Activated CD8-positive, alpha-beta memory T cell treated with anti-CD3 and anti-CD28 coated beads, Interleukin-2, amount 10 ng/mL, durations not matched to agents 7 days and 5 days (primary cell): ENCODE measurements at regions of chr17 and their contacts with region 1.

Region 1: DNA sequence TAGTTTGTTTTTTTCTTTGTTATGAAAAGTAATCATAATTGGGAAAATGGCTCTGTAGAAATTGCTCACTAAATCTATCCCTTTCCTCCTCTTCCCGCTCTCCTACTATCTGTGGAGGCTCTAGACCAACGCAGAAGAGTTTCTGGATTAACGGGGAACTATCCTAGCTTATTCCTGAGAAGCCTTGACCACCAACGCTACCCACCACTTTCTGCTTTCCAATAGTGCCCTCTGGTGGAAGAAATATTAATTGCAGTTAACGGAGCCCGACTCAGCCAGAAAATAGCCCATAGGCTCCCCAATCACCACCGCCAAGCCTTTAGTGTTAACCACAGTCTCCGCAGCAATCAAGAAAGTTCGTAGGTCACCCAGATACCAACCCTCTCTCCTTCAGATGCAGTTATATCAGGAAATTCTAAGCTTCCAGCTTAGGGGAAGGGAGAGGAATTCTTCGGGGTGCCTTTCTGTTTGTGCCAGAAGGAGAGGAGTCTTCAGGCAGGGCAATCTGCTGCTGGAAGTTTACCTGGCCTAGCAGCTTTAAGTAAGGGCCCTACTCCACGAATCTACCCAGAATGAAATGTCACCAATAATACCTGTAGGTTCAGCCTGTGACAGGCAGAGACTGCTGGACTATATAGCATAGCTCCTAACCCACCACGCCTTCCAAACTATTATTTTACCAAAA is 23.0 kb upstream of the NSRP1 start:
- DNase-seq: peak; percentile 62
- ATAC-seq: peak; percentile 72
- H3K4me3 Mint-ChIP-seq: no peak overlapping the region
- H3K27ac Mint-ChIP-seq: no peak overlapping the region
- H3K4me1 Mint-ChIP-seq: peaks cover 7% of the 10 kb centered on the region
- H3K27me3 Mint-ChIP-seq: peaks cover 42% of the 10 kb centered on the region

Region 2: DNA sequence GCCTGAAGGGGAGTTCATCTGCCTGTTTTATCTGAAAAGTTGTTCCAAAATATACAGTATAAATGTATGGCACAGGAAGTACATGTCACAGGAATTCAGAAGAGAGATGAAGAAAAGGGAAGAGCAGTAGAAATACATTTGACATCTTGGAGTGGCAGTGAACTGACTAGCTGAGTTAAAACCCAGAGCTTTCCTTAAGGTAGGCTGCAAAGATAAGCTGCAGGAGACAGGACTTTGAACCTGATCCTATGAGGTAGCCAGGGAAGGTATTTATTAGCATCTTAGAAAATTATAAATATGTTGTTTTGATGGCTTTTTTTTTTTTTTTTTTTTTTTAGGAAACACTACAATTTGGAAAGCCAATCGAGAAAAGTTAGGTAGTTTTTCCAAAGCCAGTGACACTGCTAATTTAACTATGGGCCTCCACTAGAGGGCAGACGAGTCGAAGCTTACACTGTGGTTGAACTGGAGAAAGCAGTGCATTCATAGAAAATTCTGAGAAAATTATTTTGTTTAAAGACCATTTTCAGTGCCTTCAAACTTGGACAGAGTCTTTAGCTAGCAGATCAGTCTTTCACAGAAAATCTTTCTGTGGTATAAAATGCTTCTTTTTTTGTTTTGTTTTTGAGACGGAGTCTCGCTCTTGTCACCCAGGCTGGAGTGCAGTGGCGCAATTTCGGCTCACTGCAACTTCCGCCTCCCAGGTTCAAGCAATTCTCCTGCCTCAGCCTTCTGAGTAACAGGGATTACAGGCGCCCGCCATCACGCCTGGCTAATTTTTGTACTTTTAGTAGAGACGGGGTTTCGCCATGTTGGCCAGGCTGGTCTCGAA is 285.9 kb before region 1 on chr17:
- CTCF ChIA-PET with region 1: interaction called, 16 read pairs
- DNase-seq: peak; percentile 78
- ATAC-seq: peak; percentile 78
- H3K4me3 Mint-ChIP-seq: no peak overlapping the region
- H3K27ac Mint-ChIP-seq: no peak overlapping the region
- H3K4me1 Mint-ChIP-seq: peaks cover 19% of the 10 kb centered on the region
- H3K27me3 Mint-ChIP-seq: no peaks in the 10 kb centered on the region

Region 3: GRCh38 chr17:30021708-30022317 is 71.8 kb before region 1 on chr17:
- CTCF ChIA-PET with region 1: interaction called, 45 read pairs
- DNase-seq: peak; percentile 47
- ATAC-seq: no peak
- H3K4me3 Mint-ChIP-seq: no peak overlapping the region
- H3K27ac Mint-ChIP-seq: no peak overlapping the region
- H3K4me1 Mint-ChIP-seq: peaks cover 1% of the 10 kb centered on the region
- H3K27me3 Mint-ChIP-seq: peaks cover 13% of the 10 kb centered on the region

Region 4: GRCh38 chr17:30031214-30031869 is 62.3 kb before region 1 on chr17:
- CTCF ChIA-PET with region 1: interaction called, 45 read pairs
- DNase-seq: no peak
- ATAC-seq: no peak
- H3K4me3 Mint-ChIP-seq: no peak overlapping the region
- H3K27ac Mint-ChIP-seq: no peak overlapping the region
- H3K4me1 Mint-ChIP-seq: peaks cover 2% of the 10 kb centered on the region
- H3K27me3 Mint-ChIP-seq: peaks cover 9% of the 10 kb centered on the region

Region 5: DNA sequence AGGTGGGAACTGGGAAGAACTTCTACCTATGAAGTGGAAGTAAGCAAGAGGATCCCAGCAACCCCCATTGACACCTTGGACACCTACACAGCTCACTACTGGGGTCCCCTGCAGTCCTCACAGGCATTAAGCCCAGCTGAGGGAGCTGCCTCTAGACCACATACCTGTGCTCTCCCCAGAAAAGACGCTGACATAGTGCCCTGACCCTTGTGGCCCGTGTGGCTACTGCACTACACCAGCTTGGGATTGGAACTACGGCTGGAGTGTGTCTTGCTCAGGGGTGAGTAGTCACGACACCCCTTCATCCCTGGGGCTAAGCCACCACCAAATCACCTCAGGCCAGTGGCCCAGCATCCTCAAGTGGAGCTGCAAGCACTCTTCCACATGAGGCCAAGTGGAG is 31.2 kb before region 1 on chr17:
- CTCF ChIA-PET with region 1: interaction called, 12 read pairs
- DNase-seq: no peak
- ATAC-seq: no peak
- H3K4me3 Mint-ChIP-seq: no peak overlapping the region
- H3K27ac Mint-ChIP-seq: no peak overlapping the region
- H3K4me1 Mint-ChIP-seq: no peaks in the 10 kb centered on the region
- H3K27me3 Mint-ChIP-seq: peaks cover 42% of the 10 kb centered on the region

Region 6: DNA sequence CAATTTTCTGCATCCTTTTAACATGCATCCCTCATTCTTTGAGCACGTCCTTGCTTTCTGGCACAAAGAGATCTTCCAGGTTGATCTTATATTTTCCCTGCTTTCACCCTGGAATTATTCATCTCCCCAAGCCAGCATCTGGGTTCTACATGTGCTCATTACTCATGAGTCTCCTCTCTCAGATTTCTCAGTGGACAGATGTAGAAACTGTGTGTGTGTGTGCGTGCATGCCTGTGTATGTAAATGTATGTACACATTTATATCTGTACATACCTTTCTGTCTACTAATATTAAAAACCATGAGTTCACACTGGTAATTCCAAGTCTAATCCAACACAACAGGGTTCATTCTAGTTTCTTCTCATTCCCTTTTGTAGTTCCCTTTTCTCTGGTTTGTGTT is 18.9 kb before region 1 on chr17:
- CTCF ChIA-PET with region 1: interaction called, 17 read pairs
- DNase-seq: no peak
- ATAC-seq: no peak
- H3K4me3 Mint-ChIP-seq: no peak overlapping the region
- H3K27ac Mint-ChIP-seq: no peak overlapping the region
- H3K4me1 Mint-ChIP-seq: no peaks in the 10 kb centered on the region
- H3K27me3 Mint-ChIP-seq: peaks cover 52% of the 10 kb centered on the region

Region 7: DNA sequence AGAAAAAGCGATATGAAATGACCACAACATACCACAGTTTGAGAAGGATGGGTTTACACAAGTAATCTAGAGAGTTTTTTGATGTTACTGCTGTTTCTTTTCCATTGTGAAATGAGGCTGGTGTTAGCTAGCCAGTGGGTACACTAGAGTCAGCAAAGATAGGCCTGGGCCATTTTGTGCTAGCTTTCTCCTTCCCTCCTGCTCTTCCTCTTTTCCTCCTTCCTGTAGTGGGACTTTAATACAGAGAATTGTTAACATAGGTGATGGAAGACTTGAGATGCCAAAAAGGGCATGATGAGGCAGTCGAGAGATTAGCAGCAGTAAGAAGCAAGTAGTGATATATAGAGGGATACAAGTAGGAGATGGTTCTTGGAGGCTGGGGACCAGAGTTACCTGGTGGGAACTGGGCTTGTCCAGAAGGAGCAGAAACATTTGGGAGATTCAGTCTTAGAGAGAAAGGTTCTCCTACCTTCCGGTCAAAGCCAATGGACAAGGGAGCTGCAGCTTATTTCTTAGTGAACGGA is 30.7 kb after region 1 on chr17:
- CTCF ChIA-PET with region 1: interaction called, 22 read pairs
- DNase-seq: no peak
- ATAC-seq: no peak
- H3K4me3 Mint-ChIP-seq: no peak overlapping the region
- H3K27ac Mint-ChIP-seq: no peak overlapping the region
- H3K4me1 Mint-ChIP-seq: peaks cover 34% of the 10 kb centered on the region
- H3K27me3 Mint-ChIP-seq: no peaks in the 10 kb centered on the region